ENCODE measurements at regions of chr6 and their contacts with region 1.

Region 1: DNA sequence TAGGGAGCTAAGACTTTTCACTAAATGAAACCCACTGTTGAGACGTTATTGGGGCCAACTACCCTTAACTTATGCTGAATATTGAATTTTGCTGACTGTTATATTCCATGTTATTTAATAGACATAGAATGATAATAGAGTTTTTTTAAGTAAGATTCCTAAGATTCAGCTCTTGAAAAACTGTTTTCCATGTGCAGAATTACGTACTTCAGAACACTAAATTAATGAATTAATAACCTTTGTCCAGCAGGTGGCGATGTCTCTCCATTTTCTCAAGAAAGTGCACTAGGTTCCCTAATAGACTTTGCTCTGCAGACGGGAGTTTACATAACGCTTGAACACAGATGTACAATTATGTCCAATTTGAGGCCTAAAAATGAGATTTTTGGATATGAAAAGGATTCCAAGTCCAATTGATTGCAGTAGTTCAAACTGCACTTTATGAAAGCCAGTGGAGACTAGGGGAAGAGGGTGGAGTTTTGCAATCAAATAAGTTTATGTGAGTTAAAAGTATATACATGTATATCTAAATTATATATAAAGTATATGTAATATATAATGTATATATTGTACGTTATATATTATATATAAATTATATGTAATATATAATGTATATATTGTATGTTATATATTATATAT is 282.1 kb downstream of the UST start:
- DNase-seq: no peak
- ATAC-seq: peak; percentile 71 to 80
- H3K4me3 ChIP-seq: no peak overlapping the region
- H3K27ac ChIP-seq: no peak overlapping the region
- H3K4me1 ChIP-seq: no peaks in the 10 kb centered on the region
- H3K27me3 ChIP-seq: no peaks in the 10 kb centered on the region

Region 2: DNA sequence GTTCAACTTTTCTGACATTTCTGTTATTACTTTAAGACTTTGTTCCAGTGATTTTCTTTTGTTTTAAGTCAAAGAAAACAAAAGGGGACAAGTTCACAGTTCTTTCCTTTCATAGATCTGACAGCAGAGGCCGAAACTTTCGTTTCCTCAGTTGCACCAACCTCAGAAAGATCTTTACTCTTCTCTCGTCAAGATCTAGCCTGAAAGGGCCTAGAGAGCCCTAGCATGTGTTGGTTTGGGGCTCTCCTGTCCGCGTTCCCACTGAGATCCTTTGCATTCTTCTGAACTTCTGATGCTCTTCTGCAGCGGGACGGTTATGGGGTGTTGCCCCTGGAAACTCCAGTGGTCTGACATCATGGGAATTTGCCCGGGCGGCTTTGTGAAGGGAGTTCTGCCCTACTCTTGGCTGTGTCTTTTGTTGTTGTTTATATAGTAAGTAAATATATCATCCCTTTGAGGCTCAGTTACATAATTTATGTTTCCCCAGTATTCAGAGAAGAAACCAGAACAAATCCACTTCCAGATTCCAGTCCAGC is 557.2 kb before region 1 on chr6:
- intact Hi-C with region 1: no loop called
- DNase-seq: peak; percentile 48 to 72 (median 50)
- ATAC-seq: peak; percentile 34 to 74
- H3K4me3 ChIP-seq: no peak overlapping the region
- H3K27ac ChIP-seq: peak overlapping the region; percentile 73
- H3K4me1 ChIP-seq: peaks cover 2% of the 10 kb centered on the region
- H3K27me3 ChIP-seq: no peaks in the 10 kb centered on the region

Region 3: GRCh38 chr6:148776321-148777308 is 252.3 kb before region 1 on chr6:
- intact Hi-C with region 1: no loop called
- DNase-seq: no peak
- ATAC-seq: peak; percentile 29 to 52
- H3K4me3 ChIP-seq: no peak overlapping the region
- H3K27ac ChIP-seq: no peak overlapping the region
- H3K4me1 ChIP-seq: peaks cover 4% of the 10 kb centered on the region
- H3K27me3 ChIP-seq: no peaks in the 10 kb centered on the region

Region 4: GRCh38 chr6:149513915-149514314 is 485.0 kb after region 1 on chr6:
- intact Hi-C with region 1: loop called in 2 of 4 experiments (anchors 5 to 10 kb)
- DNase-seq: no peak
- ATAC-seq: peak in 1 of 2 donors; percentile 48
- H3K4me3 ChIP-seq: no peak overlapping the region
- H3K27ac ChIP-seq: no peak overlapping the region
- H3K4me1 ChIP-seq: no peaks in the 10 kb centered on the region
- H3K27me3 ChIP-seq: no peaks in the 10 kb centered on the region

Measured in right cardiac atrium (tissue), 5 donors.